Activated CD4-positive, alpha-beta memory T cell treated with anti-CD3 and anti-CD28 coated beads for 36 hours (primary cell): ENCODE measurements at regions of chr1 and their contacts with region 1.

Region 1: DNA sequence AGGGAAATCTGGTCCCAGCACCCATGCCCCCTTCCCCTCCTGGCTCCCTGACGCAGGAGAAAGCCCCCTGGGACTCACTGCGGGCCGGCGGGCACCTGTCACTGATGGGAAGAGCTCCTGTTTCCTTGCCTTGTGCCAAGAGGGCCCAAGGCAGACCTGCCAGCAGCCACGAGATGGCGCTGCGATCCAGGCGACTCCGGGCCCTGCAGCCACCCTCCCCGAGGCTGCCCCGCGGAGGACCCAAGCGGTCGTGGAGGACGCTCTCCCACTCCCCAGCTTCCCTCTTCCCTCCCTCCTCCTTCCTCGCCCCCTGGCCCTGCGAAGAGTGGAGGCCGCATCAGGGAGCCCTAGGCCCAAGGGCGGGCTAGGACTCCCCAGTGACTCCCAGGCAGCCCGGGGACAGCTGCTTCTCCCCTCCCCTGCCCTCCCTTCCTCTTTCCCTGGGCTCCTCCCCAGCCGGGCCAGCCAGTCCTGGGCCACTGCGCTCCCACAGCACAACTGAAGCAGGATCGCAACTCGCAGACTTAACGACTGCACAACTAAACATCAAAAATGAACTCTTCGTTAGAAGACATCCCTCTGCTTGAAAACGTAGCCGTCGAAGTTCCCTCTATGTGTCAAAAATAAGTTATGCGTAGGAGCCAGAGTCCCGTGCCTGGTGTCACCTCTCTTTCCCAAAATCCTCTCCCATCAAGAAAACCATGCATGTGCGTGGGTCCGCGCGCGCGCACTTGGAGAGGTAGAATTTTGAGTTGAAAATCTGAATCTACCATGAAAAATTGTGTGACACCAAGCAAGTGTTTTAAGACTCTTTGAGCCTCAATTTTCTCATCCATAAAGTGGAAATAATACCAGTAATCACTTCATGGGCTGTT is 34.2 kb downstream of the BATF3 start:
- DNase-seq: peak; percentile 88
- H3K4me3 Mint-ChIP-seq: peak overlapping the region; percentile 73
- H3K27ac Mint-ChIP-seq: peak overlapping the region; percentile 57
- H3K4me1 Mint-ChIP-seq: peaks cover 19% of the 10 kb centered on the region
- H3K27me3 Mint-ChIP-seq: peaks cover 3% of the 10 kb centered on the region

Region 2: GRCh38 chr1:212683357-212683722 is 17.9 kb after region 1 on chr1:
- CTCF ChIA-PET with region 1: interaction called, 28 read pairs
- POLR2A ChIA-PET with region 1: no interaction called
- intact Hi-C with region 1: no loop called
- DNase-seq: peak; percentile 90
- H3K4me3 Mint-ChIP-seq: peak overlapping the region; percentile 40
- H3K27ac Mint-ChIP-seq: peak overlapping the region; percentile 89
- H3K4me1 Mint-ChIP-seq: peaks cover 58% of the 10 kb centered on the region
- H3K27me3 Mint-ChIP-seq: peaks cover 2% of the 10 kb centered on the region

Region 3: DNA sequence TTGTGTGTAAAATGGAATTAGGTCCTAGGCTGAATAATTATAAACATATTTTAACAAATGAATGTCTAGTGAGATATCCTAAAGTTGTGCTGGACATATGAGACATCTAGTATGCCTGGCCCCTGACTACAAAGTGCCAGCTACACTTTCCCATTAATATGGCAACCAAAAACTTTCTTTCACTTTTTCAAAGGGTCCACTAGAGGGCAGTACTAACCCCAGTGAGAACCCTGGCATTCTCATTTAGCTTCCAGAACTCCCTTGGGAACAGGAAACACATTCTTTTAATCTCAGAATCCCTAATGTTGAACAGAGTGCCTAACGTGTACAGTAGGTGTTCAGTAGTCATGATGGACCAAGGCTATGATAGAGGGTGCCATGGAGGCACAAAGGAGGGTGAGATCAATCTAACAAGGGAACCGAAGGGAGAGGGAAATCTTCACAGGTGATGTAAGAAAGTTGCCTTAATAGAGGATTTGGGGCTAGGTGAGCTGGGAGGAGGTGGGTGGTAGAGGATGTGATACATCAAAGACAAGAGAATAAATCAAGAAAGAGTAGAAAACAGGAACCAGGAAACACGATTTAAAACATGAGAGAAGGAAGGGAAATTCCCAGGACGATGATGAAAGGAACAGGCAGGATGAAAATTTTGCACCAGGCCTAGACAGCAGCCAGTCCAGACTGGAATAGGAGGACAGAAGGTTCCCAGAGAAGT is 84.5 kb after region 1 on chr1:
- CTCF ChIA-PET with region 1: interaction called, 45 read pairs
- POLR2A ChIA-PET with region 1: no interaction called
- intact Hi-C with region 1: no loop called
- DNase-seq: peak; percentile 27
- H3K4me3 Mint-ChIP-seq: peak overlapping the region; percentile 45
- H3K27ac Mint-ChIP-seq: peak overlapping the region; percentile 81
- H3K4me1 Mint-ChIP-seq: peaks cover 73% of the 10 kb centered on the region
- H3K27me3 Mint-ChIP-seq: no peaks in the 10 kb centered on the region

Region 4: DNA sequence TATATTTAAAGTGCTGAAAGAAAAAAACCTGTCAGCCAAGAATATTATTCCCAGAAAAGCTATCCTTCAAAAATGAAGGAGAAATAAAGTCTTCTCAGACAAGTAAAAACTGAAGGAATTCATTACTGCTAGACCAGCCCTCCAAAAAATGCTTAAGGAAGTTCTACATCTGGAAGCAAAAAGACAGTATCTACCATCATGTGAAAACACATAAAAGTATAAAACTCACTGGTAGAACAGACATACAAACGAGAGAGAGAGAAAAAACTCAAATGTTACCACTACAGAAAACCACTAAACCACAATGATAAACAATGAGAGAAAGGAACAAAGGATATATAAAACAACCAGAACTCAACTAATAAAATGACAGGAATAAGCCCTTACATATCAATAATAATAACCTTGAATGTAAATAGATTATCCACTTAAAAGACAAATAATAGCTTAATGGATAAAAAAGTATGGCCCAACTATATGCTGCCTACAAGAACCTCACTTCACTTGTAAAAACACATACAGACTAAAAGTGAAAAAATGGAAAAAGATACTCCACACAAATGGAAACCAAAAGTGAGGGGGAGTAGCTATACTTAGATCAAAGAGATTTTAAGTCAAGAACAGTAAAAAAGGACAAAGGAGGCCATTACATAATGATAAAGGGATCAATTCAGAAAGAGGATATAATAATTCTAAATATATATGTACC is 104.1 kb after region 1 on chr1:
- CTCF ChIA-PET with region 1: interaction called, 24 read pairs
- POLR2A ChIA-PET with region 1: no interaction called
- intact Hi-C with region 1: no loop called
- DNase-seq: no peak
- H3K4me3 Mint-ChIP-seq: peak overlapping the region; percentile 34
- H3K27ac Mint-ChIP-seq: peak overlapping the region; percentile 30
- H3K4me1 Mint-ChIP-seq: peaks cover 55% of the 10 kb centered on the region
- H3K27me3 Mint-ChIP-seq: no peaks in the 10 kb centered on the region

Region 5: GRCh38 chr1:212782422-212783154 is 117.1 kb after region 1 on chr1:
- CTCF ChIA-PET with region 1: interaction called, 156 read pairs
- POLR2A ChIA-PET with region 1: interaction called, 3 read pairs
- intact Hi-C with region 1: loop called (anchors 1 kb)
- DNase-seq: no peak
- H3K4me3 Mint-ChIP-seq: no peak overlapping the region
- H3K27ac Mint-ChIP-seq: peak overlapping the region; percentile 6
- H3K4me1 Mint-ChIP-seq: peaks cover 37% of the 10 kb centered on the region
- H3K27me3 Mint-ChIP-seq: no peaks in the 10 kb centered on the region

Region 6: GRCh38 chr1:212994926-212995325 is 329.4 kb after region 1 on chr1:
- CTCF ChIA-PET with region 1: interaction called, 30 read pairs
- POLR2A ChIA-PET with region 1: no interaction called
- intact Hi-C with region 1: loop called (anchors 1 kb)
- DNase-seq: no peak
- H3K4me3 Mint-ChIP-seq: no peak overlapping the region
- H3K27ac Mint-ChIP-seq: no peak overlapping the region
- H3K4me1 Mint-ChIP-seq: peaks cover 10% of the 10 kb centered on the region
- H3K27me3 Mint-ChIP-seq: no peaks in the 10 kb centered on the region